Endothelial cell of umbilical vein (primary cell): ENCODE measurements at regions of chr1 and their contacts with region 1.

Region 1: GRCh38 chr1:217734973-217735372 is 103.8 kb downstream of the SPATA17 start:
- DNase-seq: no peak
- H3K4me3 ChIP-seq: no peak overlapping the region
- H3K27ac ChIP-seq: no peak overlapping the region
- H3K4me1 ChIP-seq: no peaks in the 10 kb centered on the region
- H3K27me3 ChIP-seq: no peaks in the 10 kb centered on the region
- CTCF ChIP-seq: no peak
- POLR2A ChIP-seq: no peak

Region 2: GRCh38 chr1:216983823-216984222 is 751.1 kb before region 1 on chr1:
- CTCF ChIA-PET with region 1: no interaction called
- POLR2A ChIA-PET with region 1: no interaction called
- dilution Hi-C with region 1: no loop called
- intact Hi-C with region 1: loop called (anchors 5 kb)
- DNase-seq: no peak
- H3K4me3 ChIP-seq: no peak overlapping the region
- H3K27ac ChIP-seq: no peak overlapping the region
- H3K4me1 ChIP-seq: no peaks in the 10 kb centered on the region
- H3K27me3 ChIP-seq: no peaks in the 10 kb centered on the region
- CTCF ChIP-seq: no peak
- POLR2A ChIP-seq: no peak

Region 3: GRCh38 chr1:217718881-217719280 is 16.1 kb before region 1 on chr1:
- CTCF ChIA-PET with region 1: no interaction called
- POLR2A ChIA-PET with region 1: no interaction called
- dilution Hi-C with region 1: no loop called
- intact Hi-C with region 1: no loop called
- DNase-seq: no peak
- H3K4me3 ChIP-seq: no peak overlapping the region
- H3K27ac ChIP-seq: no peak overlapping the region
- H3K4me1 ChIP-seq: no peaks in the 10 kb centered on the region
- H3K27me3 ChIP-seq: no peaks in the 10 kb centered on the region
- CTCF ChIP-seq: no peak
- POLR2A ChIP-seq: no peak